ENCODE measurements at regions of chr13 and their contacts with region 1.

Region 1: GRCh38 chr13:29707876-29708543 is 112.5 kb upstream of the SLC7A1 start:
- DNase-seq: peak; percentile 21
- ATAC-seq: peak; percentile 96
- H3K4me3 ChIP-seq: no peak overlapping the region
- H3K27ac ChIP-seq: no peak overlapping the region
- H3K4me1 ChIP-seq: peaks cover 0 to 3% of the 10 kb centered on the region in 2 experiments; a peak in 1 of 4 replicates
- H3K27me3 ChIP-seq: peaks cover 11% of the 10 kb centered on the region; the same call in 1 of the 2 replicates
- CTCF ChIP-seq: peak; percentile 60 to 82 (median 80)
- POLR2A ChIP-seq: no peak
- RAD21 ChIP-seq: peak; percentile 79

Region 2: DNA sequence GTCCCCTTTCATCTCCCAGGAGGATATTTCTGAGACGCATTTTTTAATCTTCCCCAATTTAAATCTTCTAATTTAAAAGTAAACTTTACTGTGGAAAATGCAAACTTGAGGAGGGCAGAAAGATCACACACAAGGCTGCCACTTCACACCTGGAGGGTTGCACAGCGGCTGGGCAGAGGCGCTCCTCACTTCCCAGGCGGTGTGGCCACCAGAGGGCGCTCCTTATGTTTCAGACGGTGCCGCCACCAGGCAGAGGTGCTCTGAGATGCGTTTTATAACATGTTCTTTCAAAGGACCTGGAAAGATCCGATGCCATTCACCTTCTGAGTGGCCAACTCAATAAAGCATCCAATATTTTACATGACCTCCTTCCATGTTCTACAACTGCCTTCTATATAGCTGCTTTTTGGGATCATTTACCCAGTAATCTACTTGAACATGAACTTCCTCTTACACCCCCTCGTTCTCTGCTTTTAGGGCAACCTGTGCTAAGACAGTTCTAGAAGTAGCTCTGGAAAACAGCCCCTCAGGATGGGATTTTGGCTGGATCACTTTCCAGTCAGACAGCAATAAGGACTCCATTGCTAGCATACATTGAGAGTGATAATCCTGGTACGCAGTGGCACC is 902.7 kb before region 1 on chr13:
- CTCF ChIA-PET with region 1: no interaction called
- POLR2A ChIA-PET with region 1: no interaction called
- RAD21 ChIA-PET with region 1: no interaction called
- intact Hi-C with region 1: loop called (anchors 5 kb)
- DNase-seq: no peak
- ATAC-seq: peak; percentile 88
- H3K4me3 ChIP-seq: no peak overlapping the region
- H3K27ac ChIP-seq: no peak overlapping the region
- H3K4me1 ChIP-seq: no peaks in the 10 kb centered on the region
- H3K27me3 ChIP-seq: no peaks in the 10 kb centered on the region
- CTCF ChIP-seq: peak; percentile 35 to 83 (median 66); a peak in 5 of 6 replicates
- POLR2A ChIP-seq: no peak
- RAD21 ChIP-seq: peak; percentile 37

Region 3: GRCh38 chr13:29472332-29472961 is 235.6 kb before region 1 on chr13:
- CTCF ChIA-PET with region 1: interaction called, 10 read pairs
- POLR2A ChIA-PET with region 1: no interaction called
- RAD21 ChIA-PET with region 1: no interaction called
- intact Hi-C with region 1: loop called (anchors 1 kb)
- DNase-seq: peak; percentile 63
- ATAC-seq: peak; percentile 94
- H3K4me3 ChIP-seq: no peak overlapping the region
- H3K27ac ChIP-seq: no peak overlapping the region
- H3K4me1 ChIP-seq: no peaks in the 10 kb centered on the region
- H3K27me3 ChIP-seq: peaks cover 8% of the 10 kb centered on the region; the same call in 1 of the 2 replicates
- CTCF ChIP-seq: peak; percentile 99 to 100 (median 99)
- POLR2A ChIP-seq: no peak
- RAD21 ChIP-seq: peak; percentile 66

Region 4: DNA sequence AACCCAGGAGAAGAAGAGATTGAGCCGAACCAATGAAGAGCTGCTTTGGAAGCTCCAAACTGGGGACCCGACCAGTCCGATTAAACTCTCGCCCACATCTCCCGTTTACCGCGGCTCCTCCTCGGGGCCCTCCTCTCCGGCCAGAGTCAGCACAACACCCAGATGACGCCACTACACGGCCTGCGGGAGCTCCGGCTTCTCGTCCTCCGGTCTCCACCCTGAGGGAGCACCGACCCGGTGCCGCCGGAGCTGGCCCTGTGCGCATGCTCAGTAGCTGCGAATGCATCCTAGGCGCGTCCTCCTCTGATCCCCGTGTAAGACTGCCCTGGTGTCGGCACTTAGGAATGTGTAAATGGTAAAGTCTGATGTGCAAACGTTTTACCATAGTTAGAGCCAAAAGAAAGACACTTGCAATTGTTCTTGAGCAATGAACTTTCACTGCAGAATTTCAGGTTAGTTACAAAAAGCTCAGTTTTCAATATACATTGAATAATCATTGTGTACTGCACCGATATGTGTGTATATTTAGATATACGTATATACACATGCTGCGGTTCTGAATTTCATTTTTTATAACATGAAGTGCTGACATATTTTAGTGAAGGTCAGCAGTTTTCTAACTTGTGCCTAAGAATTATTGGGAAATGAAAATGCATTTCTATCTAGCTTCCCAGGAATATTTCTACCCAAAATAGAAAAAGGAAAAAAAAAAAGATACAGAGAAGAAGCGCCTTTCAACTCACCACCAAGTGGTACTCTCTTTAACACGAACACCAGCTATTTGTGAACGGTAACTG is 204.8 kb before region 1 on chr13:
- CTCF ChIA-PET with region 1: interaction called, 25 read pairs
- POLR2A ChIA-PET with region 1: no interaction called
- RAD21 ChIA-PET with region 1: interaction called, 3 to 7 read pairs
- intact Hi-C with region 1: loop called (anchors 1 kb)
- DNase-seq: no peak
- ATAC-seq: no peak
- H3K4me3 ChIP-seq: no peak overlapping the region
- H3K27ac ChIP-seq: no peak overlapping the region
- H3K4me1 ChIP-seq: no peaks in the 10 kb centered on the region
- H3K27me3 ChIP-seq: no peaks in the 10 kb centered on the region
- CTCF ChIP-seq: no peak
- POLR2A ChIP-seq: no peak
- RAD21 ChIP-seq: no peak

Region 5: DNA sequence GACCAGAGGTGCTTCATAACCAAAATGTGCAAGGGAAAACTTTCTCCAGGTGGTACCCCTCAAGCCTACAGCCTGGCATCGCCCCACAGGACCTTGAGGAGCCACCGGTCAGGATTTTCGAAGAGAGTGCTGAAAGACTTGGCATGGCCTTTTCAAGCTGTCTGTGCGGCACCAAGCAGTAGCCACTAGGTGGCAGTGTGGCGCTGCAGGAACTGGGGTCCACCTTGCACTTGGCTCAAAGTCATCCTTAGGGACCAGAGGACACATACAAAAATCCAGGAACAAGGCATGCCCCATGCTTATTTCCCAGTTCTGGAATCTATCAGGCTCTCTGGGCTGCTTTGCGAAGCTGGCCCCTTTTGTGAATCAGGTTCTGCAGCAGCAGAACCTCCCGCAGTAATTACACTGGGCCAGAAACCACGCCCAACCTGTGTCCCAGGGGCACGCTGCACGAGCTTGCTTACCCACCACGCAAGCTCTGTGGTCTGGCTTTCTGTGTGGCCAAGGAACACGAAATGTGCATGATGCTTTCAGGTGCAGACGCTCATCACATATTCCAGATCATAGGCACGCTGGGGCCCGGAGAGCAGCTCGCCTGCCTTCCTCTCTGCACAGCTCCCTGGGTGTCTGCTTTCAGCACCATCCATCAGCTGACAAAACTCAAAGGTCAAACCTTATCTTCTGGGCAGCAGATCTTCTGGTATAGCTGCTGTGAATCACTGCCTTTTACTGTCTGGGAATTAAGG is 199.7 kb before region 1 on chr13:
- CTCF ChIA-PET with region 1: interaction called, 25 read pairs
- POLR2A ChIA-PET with region 1: interaction called, 3 read pairs
- RAD21 ChIA-PET with region 1: interaction called, 3 to 7 read pairs
- intact Hi-C with region 1: loop called (anchors 1 kb)
- DNase-seq: peak; percentile 24
- ATAC-seq: peak; percentile 92
- H3K4me3 ChIP-seq: no peak overlapping the region
- H3K27ac ChIP-seq: no peak overlapping the region
- H3K4me1 ChIP-seq: no peaks in the 10 kb centered on the region
- H3K27me3 ChIP-seq: no peaks in the 10 kb centered on the region
- CTCF ChIP-seq: peak; percentile 45 to 98 (median 97); a peak in 5 of 6 replicates
- POLR2A ChIP-seq: no peak
- RAD21 ChIP-seq: peak; percentile 82

Region 6: GRCh38 chr13:29918885-29919223 is 210.8 kb after region 1 on chr13:
- CTCF ChIA-PET with region 1: no interaction called
- POLR2A ChIA-PET with region 1: no interaction called
- RAD21 ChIA-PET with region 1: no interaction called
- intact Hi-C with region 1: no loop called
- DNase-seq: no peak
- ATAC-seq: no peak
- H3K4me3 ChIP-seq: no peak overlapping the region
- H3K27ac ChIP-seq: no peak overlapping the region
- H3K4me1 ChIP-seq: peaks cover 25 to 46% of the 10 kb centered on the region in 2 experiments
- H3K27me3 ChIP-seq: no peaks in the 10 kb centered on the region
- CTCF ChIP-seq: no peak
- POLR2A ChIP-seq: no peak
- RAD21 ChIP-seq: no peak